Activated CD8-positive, alpha-beta T cell treated with anti-CD3 and anti-CD28 coated beads, Interleukin-2, amount 10 ng/mL, durations not matched to agents 7 days and 5 days (primary cell): ENCODE measurements at regions of chr6 and their contacts with region 1.

Region 1: GRCh38 chr6:722077-722524 is 29.2 kb upstream of the EXOC2 start:
- DNase-seq: peak; percentile 85
- ATAC-seq: peak; percentile 92
- H3K4me3 Mint-ChIP-seq: no peak overlapping the region
- H3K27ac Mint-ChIP-seq: no peak overlapping the region
- H3K4me1 Mint-ChIP-seq: peaks cover 6% of the 10 kb centered on the region
- H3K27me3 Mint-ChIP-seq: peaks cover 13% of the 10 kb centered on the region

Region 2: DNA sequence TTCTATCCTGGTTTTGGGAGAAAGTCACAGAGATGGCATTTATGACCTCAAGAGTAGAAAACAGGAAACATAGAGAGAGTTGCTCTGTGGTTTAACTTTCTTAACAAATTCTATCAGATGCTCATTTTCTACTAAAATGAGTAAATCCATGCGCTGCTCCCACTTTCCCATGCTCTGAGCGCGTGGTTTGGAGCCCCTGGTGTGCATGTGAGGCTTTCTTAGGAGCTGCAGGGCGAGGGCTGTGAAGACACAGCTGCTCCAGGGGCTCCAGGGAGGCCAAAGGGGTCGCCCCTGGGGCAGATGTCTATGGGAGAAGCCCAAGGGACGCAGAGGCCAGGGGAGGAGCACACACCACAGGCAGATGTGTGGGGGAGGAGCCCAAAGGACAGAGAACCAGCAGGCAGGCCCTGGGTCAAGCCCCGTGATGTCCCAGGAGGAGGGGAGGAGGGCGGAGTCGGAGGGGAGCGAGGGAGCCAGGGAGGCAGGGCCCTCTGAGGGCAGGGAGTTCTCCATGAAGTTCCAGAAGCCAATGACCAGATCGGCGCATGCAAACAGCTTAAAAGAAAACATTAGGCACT is 207.6 kb before region 1 on chr6:
- CTCF ChIA-PET with region 1: no interaction called
- POLR2A ChIA-PET with region 1: no interaction called
- DNase-seq: no peak
- ATAC-seq: no peak
- H3K4me3 Mint-ChIP-seq: no peak overlapping the region
- H3K27ac Mint-ChIP-seq: peak overlapping the region; percentile 59
- H3K4me1 Mint-ChIP-seq: peaks cover 53% of the 10 kb centered on the region
- H3K27me3 Mint-ChIP-seq: no peaks in the 10 kb centered on the region

Region 3: DNA sequence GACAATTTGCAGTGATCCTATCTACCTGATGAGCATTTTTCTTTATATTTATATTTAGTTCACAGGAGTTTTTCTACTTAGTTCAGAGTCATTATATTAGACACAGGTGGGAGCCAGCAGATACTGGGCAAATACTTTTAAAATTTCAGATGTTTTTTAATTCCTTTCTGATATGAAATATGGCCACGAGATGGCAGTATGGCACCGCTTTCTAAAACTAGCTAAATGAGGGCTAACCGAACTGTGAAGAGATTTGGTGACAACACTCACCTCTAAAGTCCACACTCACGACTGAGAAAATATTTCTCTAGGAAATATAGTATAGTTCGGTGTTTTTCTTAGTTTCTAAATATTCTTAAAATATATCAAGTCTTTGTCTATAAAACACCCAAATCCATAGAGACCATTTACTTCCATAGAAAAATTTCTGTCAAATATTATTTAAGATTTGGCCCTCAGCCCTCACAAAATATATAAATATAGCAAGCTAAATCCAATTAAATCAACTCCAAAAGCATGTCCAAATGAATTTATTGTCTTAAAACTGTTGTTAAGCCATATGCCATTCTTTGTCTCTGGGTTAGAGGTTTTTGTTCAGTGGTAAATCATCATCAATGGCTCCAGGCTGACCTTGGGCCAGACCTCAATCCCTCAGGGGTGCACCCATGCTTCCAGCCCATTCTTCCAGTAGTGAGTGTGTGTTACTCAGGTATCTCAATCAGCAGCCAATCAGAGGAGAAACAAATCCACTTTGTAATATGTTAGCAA is 128.8 kb before region 1 on chr6:
- CTCF ChIA-PET with region 1: interaction called, 23 read pairs
- POLR2A ChIA-PET with region 1: no interaction called
- DNase-seq: peak; percentile 81
- ATAC-seq: peak; percentile 75
- H3K4me3 Mint-ChIP-seq: no peak overlapping the region
- H3K27ac Mint-ChIP-seq: no peak overlapping the region
- H3K4me1 Mint-ChIP-seq: peaks cover 5% of the 10 kb centered on the region
- H3K27me3 Mint-ChIP-seq: no peaks in the 10 kb centered on the region

Region 4: GRCh38 chr6:604579-604978 is 117.5 kb before region 1 on chr6:
- CTCF ChIA-PET with region 1: no interaction called
- POLR2A ChIA-PET with region 1: no interaction called
- DNase-seq: no peak
- ATAC-seq: no peak
- H3K4me3 Mint-ChIP-seq: no peak overlapping the region
- H3K27ac Mint-ChIP-seq: no peak overlapping the region
- H3K4me1 Mint-ChIP-seq: no peaks in the 10 kb centered on the region
- H3K27me3 Mint-ChIP-seq: no peaks in the 10 kb centered on the region

Region 5: DNA sequence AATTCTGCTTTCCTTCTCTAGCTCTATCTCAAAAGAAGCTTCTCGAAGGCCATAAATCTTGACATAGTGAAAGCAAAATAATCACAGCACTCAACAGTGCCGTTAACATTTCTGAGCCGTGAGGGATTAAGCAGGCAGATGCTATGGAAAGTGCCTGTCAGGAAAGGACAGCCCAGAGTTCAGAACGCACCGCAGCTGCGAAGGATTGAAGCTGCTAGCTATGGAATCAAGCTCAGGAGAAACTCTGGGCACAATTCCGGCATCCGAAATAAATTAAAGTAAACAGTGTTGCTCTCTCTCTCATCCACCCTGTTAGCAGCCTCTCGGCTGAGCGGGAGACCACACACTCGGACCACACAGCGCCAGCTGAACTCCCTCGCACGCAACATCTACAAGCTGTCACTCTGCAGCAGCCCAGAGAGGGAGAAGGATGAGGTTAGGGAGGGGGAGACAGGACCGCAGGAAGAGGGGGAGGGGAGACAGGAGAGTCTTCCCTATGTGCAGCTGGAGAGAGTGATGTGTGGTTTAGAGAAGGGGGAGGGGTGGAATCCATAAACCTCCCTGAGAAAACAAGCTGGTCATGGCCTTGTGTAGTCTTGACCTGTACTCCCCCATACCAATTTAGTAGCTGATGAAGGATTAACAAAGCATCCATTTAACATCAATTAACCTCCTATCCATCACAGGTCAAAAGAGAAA is 38.2 kb before region 1 on chr6:
- CTCF ChIA-PET with region 1: interaction called, 11 read pairs
- POLR2A ChIA-PET with region 1: no interaction called
- DNase-seq: peak; percentile 62
- ATAC-seq: peak; percentile 73
- H3K4me3 Mint-ChIP-seq: peak overlapping the region; percentile 54
- H3K27ac Mint-ChIP-seq: peak overlapping the region; percentile 81
- H3K4me1 Mint-ChIP-seq: peaks cover 47% of the 10 kb centered on the region
- H3K27me3 Mint-ChIP-seq: no peaks in the 10 kb centered on the region

Region 6: DNA sequence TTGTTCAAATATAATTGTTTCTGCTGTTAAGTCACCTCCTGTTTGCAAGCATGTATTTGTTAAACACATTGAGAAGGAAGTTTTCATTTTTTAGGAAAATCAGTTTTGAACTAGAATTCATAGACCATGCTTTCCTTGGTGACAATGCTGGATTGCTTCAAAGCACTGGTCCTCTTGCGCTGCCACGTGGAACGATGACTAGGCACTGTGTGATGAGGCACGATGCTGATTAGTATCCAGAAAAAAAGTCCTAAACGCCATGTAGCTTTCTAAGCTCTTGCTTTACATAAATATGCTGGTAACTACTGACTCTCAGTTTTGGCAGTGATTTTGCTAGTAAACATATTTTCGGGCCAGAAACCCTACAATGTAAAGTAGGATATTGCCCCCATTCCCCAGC is 18.1 kb before region 1 on chr6:
- CTCF ChIA-PET with region 1: interaction called, 51 read pairs
- POLR2A ChIA-PET with region 1: interaction called, 3 read pairs
- DNase-seq: no peak
- ATAC-seq: no peak
- H3K4me3 Mint-ChIP-seq: no peak overlapping the region
- H3K27ac Mint-ChIP-seq: no peak overlapping the region
- H3K4me1 Mint-ChIP-seq: peaks cover 13% of the 10 kb centered on the region
- H3K27me3 Mint-ChIP-seq: peaks cover 29% of the 10 kb centered on the region

Region 7: GRCh38 chr6:1396952-1397868 is 675.1 kb after region 1 on chr6:
- CTCF ChIA-PET with region 1: interaction called, 16 read pairs
- POLR2A ChIA-PET with region 1: no interaction called
- DNase-seq: peak; percentile 76
- ATAC-seq: peak; percentile 65
- H3K4me3 Mint-ChIP-seq: no peak overlapping the region
- H3K27ac Mint-ChIP-seq: no peak overlapping the region
- H3K4me1 Mint-ChIP-seq: peaks cover 6% of the 10 kb centered on the region
- H3K27me3 Mint-ChIP-seq: peaks cover 54% of the 10 kb centered on the region